GM10248 (cell line): ENCODE measurements at regions of chr11 and their contacts with region 1.

Region 1: DNA sequence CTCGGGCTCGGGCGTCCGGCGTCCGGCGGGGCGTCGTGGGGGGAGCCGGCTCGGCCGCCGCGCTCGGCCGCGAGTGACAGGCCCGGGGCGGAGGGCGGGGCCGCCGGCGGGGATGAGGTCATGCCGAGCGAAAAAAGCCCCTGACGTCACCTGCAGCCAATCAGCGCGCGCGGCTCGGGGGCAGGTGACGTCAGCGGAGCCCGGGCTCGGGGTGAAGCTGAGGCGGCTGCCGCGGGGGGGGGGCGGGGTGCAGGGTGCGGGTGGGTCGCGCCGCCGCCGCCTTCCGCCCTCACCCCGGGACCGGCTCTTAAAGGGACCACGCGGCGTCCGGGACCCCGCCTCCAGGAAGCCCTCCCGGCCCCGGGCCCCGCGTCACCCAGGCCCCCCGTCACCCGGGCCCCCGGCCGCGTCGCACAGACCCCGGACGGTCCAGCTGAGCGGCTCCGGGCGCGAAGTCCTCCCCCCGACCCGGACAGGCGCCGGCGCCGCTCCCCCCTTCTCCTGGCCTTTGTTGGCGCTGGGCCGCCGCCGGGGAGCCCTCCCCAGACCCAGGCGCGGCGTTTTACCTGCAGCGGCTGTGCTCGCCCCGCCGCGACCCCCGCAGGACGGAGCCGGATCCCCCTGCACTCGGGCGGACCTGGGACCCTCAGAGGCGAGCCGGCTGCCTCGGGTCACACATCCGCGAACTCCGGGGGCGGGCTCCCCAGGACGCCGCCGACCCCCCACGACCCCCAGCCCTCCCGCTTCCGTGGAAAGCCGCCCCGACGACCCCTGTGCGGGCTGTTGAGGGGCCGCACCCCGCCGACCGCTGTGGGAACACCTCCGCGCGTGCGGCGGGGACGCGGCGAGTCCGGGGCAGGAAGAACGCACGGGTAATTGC is at the start of gene DUSP8:
- DNase-seq: peak; percentile 94
- CTCF ChIP-seq: no peak

Region 2: DNA sequence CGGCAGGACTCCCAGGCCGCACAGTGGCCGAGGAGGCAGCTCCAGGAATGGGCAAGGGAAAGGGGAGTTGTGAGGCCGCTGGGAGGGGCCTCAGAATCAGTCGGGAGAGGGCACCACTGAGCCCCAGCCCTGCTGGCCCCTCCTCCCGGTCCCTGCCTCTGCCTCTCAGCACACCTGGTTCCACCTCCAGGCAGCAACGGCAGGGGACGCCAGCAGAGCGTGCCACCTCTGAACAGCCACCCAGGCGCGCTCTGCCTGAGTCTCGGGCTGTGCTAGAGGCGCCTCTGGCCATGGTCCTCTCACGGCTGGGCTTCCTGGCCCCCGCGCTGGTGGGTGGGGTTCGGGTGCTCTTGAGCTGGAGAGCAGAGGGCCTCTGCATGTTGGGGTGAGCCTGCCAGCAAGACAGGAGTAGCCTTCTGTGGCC is 118.8 kb before region 1 on chr11:
- CTCF ChIA-PET with region 1: interaction called, 10 read pairs
- POLR2A ChIA-PET with region 1: no interaction called
- DNase-seq: peak; percentile 81
- CTCF ChIP-seq: peak; percentile 61

Region 3: GRCh38 chr11:1546536-1547400 is 25.7 kb before region 1 on chr11:
- CTCF ChIA-PET with region 1: interaction called, 38 read pairs
- POLR2A ChIA-PET with region 1: no interaction called
- DNase-seq: peak; percentile 77
- CTCF ChIP-seq: peak; percentile 66

Region 4: GRCh38 chr11:1592628-1593027 is 20.2 kb after region 1 on chr11:
- CTCF ChIA-PET with region 1: interaction called, 38 read pairs
- POLR2A ChIA-PET with region 1: no interaction called
- DNase-seq: no peak
- CTCF ChIP-seq: no peak